Activated CD8-positive, alpha-beta T cell treated with anti-CD3 and anti-CD28 coated beads, Interleukin-2, amount 10 ng/mL, durations not matched to agents 7 days and 5 days (primary cell): ENCODE measurements at regions of chr10 and their contacts with region 1.

Region 1: DNA sequence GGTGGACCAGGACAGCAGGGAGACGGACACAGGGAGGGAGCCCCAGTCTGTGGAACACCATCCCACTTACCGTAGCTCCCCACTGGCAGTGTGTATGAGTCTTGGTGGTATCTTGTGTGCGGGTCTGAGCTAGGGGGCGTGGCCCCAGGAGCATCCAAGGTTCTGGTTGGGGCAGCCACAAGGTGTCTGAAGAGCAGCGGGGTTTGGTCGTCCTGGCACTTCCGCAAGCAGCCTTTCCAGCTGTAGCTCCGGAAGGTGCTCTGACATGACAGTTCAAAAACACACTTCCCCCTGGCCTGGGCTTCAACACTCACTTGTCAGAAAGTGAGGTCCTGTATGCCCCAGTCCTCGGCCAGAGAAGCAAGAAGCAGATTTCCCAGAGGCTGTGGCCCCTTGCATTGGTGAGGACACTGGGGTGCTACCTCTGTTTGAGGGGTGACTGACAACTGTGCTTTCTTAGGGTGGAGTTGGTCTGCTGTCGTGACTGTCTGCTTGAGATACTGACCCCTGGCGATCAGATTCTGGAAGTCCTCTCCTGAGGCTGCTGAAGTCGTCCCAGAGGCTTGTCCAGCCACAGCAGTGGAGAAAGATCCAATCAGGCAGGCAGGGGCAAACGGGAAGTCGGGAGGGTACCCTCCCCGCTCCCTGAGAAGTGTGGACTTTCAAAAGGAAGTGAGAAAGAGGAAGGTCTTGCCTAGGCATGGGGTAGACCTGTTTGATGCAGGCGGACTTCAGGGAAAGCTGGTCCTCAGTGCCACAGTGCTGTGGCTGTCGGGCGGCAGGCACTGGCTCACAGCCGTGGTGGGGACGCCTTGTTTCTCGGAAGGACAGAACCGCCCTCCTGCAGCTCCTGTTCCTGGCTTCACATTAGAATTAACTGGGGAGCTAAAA is 51.4 kb upstream of the PFKFB3 start:
- DNase-seq: peak; percentile 73
- ATAC-seq: peak; percentile 84
- H3K4me3 Mint-ChIP-seq: peak overlapping the region; percentile 67
- H3K27ac Mint-ChIP-seq: peak overlapping the region; percentile 86
- H3K4me1 Mint-ChIP-seq: peaks cover 62% of the 10 kb centered on the region
- H3K27me3 Mint-ChIP-seq: no peaks in the 10 kb centered on the region

Region 2: DNA sequence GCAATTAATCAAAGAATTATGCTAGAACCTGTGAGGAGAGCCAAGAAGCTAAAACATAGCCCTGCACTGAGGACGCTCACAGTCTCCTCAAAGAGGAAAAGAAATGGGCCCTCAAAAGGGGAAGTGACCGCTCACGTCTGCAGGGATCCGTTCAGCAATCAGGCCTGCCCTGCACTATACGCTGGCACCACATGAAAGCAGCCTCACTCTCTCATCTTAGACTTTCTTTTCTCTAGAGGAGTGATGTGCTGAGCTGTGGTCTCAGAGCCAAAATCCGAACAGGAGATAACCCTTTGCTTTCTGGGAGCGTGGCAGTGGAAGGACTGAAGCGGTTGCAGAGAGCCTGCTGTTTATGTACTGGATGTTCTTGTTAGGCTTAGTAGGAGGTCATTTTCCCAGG is 82.9 kb before region 1 on chr10:
- CTCF ChIA-PET with region 1: no interaction called
- POLR2A ChIA-PET with region 1: no interaction called
- DNase-seq: peak; percentile 81
- ATAC-seq: peak; percentile 77
- H3K4me3 Mint-ChIP-seq: peak overlapping the region; percentile 74
- H3K27ac Mint-ChIP-seq: peak overlapping the region; percentile 95
- H3K4me1 Mint-ChIP-seq: peaks cover 94% of the 10 kb centered on the region
- H3K27me3 Mint-ChIP-seq: no peaks in the 10 kb centered on the region

Region 3: GRCh38 chr10:6108603-6109443 is 42.5 kb before region 1 on chr10:
- CTCF ChIA-PET with region 1: interaction called, 12 read pairs
- POLR2A ChIA-PET with region 1: no interaction called
- DNase-seq: peak; percentile 52
- ATAC-seq: peak; percentile 54
- H3K4me3 Mint-ChIP-seq: no peak overlapping the region
- H3K27ac Mint-ChIP-seq: peak overlapping the region; percentile 81
- H3K4me1 Mint-ChIP-seq: peaks cover 38% of the 10 kb centered on the region
- H3K27me3 Mint-ChIP-seq: no peaks in the 10 kb centered on the region

Region 4: DNA sequence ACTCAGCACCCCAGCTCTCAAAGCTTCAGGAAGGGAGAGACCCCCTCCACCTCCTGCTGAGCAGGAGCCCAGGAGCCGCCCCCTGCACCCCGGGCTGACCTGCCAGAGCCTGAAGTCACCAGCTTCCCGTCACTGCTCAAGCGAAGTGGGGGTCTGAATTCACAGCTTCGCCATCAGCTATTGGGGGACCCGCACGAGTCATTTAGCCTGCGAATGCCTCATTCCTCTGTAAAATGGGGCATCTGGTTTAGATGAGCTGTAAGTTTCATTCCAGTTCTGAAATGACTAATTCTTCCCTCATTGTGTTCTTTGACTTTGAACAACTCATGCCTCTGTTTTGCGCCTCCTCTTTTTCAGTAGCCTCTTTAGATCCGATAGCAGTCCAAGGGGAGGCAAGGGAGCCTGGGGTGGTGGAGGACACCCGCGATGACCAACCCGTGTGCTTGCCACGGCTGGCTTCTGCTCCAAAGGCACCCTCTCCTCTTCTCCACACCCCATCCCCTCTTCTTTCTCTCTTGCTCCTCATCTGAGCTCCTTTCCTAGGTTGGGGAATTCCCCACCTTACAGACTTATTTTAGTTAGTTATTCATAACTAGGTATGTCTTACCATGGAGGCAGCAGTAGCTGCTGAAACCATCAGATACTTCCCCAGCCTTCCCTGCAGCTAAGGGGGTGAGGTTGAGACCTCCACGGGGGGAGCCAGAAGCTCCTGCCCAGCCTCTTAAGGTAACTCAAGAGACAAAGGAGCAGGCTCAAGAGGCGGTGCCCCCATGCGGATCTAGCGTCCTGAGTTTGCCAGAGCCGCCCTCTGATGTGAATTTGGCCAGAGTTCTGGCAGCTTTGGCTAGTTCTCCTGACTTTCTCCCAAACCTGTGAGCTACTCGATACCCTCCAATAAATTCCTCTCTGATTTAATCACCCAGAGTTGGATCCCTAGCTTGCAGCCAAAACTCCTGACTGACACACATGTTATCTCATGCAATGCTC is 14.8 kb before region 1 on chr10:
- CTCF ChIA-PET with region 1: interaction called, 17 read pairs
- POLR2A ChIA-PET with region 1: interaction called, 3 read pairs
- DNase-seq: no peak
- ATAC-seq: peak; percentile 35
- H3K4me3 Mint-ChIP-seq: no peak overlapping the region
- H3K27ac Mint-ChIP-seq: no peak overlapping the region
- H3K4me1 Mint-ChIP-seq: peaks cover 44% of the 10 kb centered on the region
- H3K27me3 Mint-ChIP-seq: peaks cover 3% of the 10 kb centered on the region

Region 5: DNA sequence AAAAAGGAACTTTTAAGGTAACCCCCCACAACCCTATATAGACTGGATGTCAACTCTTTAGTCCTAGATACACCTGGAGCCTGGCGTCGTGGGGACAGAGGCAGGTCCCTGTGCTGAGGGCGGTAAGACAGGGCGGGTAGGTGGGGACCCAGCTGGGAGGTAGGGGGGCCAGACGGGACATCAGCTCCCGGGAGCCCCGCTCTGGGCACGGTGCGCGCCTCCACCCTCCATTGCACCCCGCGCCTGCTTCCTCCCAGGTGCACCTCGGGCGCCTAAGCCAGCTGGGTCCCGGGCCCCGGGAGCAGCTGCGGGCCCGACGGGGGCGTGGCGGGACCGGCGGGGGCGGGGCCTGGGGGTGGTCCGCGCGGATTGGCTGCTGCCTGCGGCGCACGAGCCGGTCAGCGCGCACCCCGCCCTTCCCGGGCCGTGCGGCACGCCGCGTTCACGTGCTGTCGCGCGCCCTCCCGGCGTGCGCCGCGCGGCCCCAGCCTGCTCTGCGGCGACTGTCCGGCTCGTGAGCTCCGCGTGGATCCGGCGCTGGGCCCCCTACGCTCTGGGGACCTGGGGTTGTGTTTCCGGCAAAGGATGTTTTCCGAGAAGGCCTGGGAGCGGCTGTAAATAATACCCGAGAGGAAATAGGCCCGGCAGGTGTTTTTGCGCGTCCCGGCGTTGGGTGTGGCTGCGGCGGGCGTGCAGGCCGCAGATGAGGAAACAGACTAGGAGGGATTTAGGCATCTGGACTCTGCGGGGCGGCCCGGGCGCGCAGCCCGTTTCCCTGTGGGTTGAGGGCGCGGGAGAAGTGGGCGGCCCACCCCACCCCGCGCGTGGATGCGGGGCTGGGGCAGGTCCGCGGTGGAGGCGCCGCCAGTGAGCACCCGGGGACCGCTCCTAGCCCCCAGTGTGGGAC is 12.3 kb after region 1 on chr10:
- CTCF ChIA-PET with region 1: interaction called, 36 read pairs
- POLR2A ChIA-PET with region 1: interaction called, 9 read pairs
- DNase-seq: peak; percentile 93
- ATAC-seq: peak; percentile 97
- H3K4me3 Mint-ChIP-seq: peak overlapping the region; percentile 96
- H3K27ac Mint-ChIP-seq: peak overlapping the region; percentile 98
- H3K4me1 Mint-ChIP-seq: peaks cover 39% of the 10 kb centered on the region
- H3K27me3 Mint-ChIP-seq: no peaks in the 10 kb centered on the region